ENCODE measurements at regions of chr19 and their contacts with region 1.

Region 1: GRCh38 chr19:2887391-2887914 is 13.3 kb upstream of the ZNF57 start:
- DNase-seq: no peak
- H3K4me3 ChIP-seq: no peak overlapping the region
- H3K27ac ChIP-seq: peak overlapping the region in 1 of 4 donors; percentile 11
- H3K4me1 ChIP-seq: peaks cover 0 to 4% (median 0%) of the 10 kb centered on the region in 4 donors
- H3K27me3 ChIP-seq: no peaks in the 10 kb centered on the region
- CTCF ChIP-seq: peak in 3 of 4 experiments; percentile 43 to 69 (median 59)
- EP300 ChIP-seq: no peak
- POLR2A ChIP-seq: no peak

Region 2: GRCh38 chr19:2867025-2867991 is 20.1 kb before region 1 on chr19 and contains the start of gene ZNF556:
- intact Hi-C with region 1: no loop called
- DNase-seq: no peak
- H3K4me3 ChIP-seq: no peak within 1 kb of the TSS
- H3K27ac ChIP-seq: no peak within 1 kb of the TSS
- H3K4me1 ChIP-seq: no peaks in the 10 kb centered on the region
- H3K27me3 ChIP-seq: no peaks in the 10 kb centered on the region
- CTCF ChIP-seq: no peak
- EP300 ChIP-seq: no peak
- POLR2A ChIP-seq: no peak
- total RNA-seq, gene ZNF556: not detected

Region 3: GRCh38 chr19:2950286-2951124 is 63.1 kb after region 1 on chr19:
- intact Hi-C with region 1: loop called (anchors 2 kb)
- DNase-seq: peak; percentile 100
- H3K4me3 ChIP-seq: peak overlapping the region; percentile 52 to 76 (median 64)
- H3K27ac ChIP-seq: peak overlapping the region; percentile 90 to 95 (median 92)
- H3K4me1 ChIP-seq: peaks cover 0 to 22% (median 16%) of the 10 kb centered on the region in 4 donors
- H3K27me3 ChIP-seq: no peaks in the 10 kb centered on the region
- CTCF ChIP-seq: no peak
- EP300 ChIP-seq: no peak
- POLR2A ChIP-seq: peak; percentile 89 to 95

Region 4: DNA sequence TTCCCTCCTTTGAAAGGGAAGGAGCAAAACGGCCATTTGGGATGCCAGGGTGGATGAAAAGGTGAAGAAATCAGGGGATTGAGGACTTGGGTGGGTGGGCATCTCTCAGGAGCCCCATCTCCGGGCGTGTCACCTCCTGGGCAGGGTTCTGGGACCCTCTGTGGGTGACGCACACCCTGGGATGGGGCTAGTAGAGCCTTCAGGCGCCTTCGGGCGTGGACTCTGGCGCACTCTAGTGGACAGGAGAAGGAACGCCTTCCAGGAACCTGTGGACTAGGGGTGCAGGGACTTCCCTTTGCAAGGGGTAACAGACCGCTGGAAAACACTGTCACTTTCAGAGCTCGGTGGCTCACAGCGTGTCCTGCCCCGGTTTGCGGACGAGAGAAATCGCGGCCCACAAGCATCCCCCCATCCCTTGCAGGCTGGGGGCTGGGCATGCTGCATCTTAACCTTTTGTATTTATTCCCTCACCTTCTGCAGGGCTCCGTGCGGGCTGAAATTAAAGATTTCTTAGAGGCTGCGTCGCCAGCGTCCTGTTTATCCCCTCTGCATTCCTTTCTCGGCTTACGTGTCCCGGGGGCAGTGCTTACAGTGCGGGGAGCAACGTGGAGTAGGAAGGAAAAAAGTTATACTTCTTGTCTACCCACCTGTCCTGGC is 275.9 kb after region 1 on chr19:
- intact Hi-C with region 1: loop called (anchors 2 kb)
- DNase-seq: peak; percentile 82
- H3K4me3 ChIP-seq: no peak overlapping the region
- H3K27ac ChIP-seq: no peak overlapping the region
- H3K4me1 ChIP-seq: peaks cover 0 to 5% (median 2%) of the 10 kb centered on the region in 4 donors
- H3K27me3 ChIP-seq: no peaks in the 10 kb centered on the region
- CTCF ChIP-seq: peak; percentile 76 to 95 (median 88)
- EP300 ChIP-seq: no peak
- POLR2A ChIP-seq: no peak